Caco-2 (cell line): ENCODE measurements at regions of chr19 and their contacts with region 1.

Region 1: GRCh38 chr19:18251587-18252369 is 22.5 kb downstream of the IQCN start:
- DNase-seq: peak; percentile 60 to 81
- H3K4me3 ChIP-seq: no peak overlapping the region
- H3K4me3 Mint-ChIP-seq: no peak overlapping the region
- H3K27ac Mint-ChIP-seq: no peak overlapping the region
- H3K4me1 ChIP-seq: no peaks in the 10 kb centered on the region
- H3K4me1 Mint-ChIP-seq: peaks cover 6% of the 10 kb centered on the region
- H3K27me3 ChIP-seq: no peaks in the 10 kb centered on the region
- H3K27me3 Mint-ChIP-seq: no peaks in the 10 kb centered on the region
- CTCF ChIP-seq: peak; percentile 87 to 97

Region 2: DNA sequence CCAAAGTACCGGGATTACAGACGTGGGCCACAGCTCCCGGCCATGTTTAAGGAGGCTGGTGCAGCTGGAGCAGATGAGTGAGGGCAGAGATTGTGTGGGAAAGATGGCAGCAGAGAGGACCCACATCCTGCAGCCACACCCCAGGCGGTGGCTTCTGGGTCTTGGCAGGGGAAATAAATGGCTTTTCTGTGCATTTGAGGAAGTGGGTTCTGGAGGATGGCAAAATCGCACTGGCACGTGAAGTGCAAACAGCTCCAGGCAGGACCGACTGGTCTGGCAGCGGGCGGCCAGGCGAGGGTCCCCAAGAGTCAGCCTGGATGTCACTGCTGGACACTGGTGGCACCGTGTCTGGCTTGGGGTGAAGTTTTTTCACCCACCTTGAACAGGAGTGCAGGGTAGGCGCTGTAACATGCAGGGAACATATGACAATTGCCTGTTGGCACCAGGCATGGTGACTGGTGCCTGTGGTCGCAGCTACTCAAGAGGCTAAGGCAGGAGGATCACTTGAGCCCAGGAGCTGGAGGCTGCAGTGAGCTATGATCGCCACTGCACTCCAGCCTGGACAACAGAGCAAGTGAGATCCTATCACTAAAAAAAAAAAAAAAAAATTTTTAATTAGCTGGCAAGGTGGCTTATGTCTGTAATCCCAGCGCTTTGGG is 448.4 kb before region 1 on chr19:
- CTCF ChIA-PET with region 1: no interaction called
- POLR2A ChIA-PET with region 1: no interaction called
- intact Hi-C with region 1: no loop called
- DNase-seq: no peak
- H3K4me3 ChIP-seq: no peak overlapping the region
- H3K4me3 Mint-ChIP-seq: no peak overlapping the region
- H3K27ac Mint-ChIP-seq: no peak overlapping the region
- H3K4me1 ChIP-seq: no peaks in the 10 kb centered on the region; the same call in 1 of the 2 replicates
- H3K4me1 Mint-ChIP-seq: no peaks in the 10 kb centered on the region
- H3K27me3 ChIP-seq: no peaks in the 10 kb centered on the region
- H3K27me3 Mint-ChIP-seq: no peaks in the 10 kb centered on the region
- CTCF ChIP-seq: no peak

Region 3: GRCh38 chr19:18112989-18113478 is 138.7 kb before region 1 on chr19:
- CTCF ChIA-PET with region 1: interaction called, 24 read pairs
- POLR2A ChIA-PET with region 1: no interaction called
- intact Hi-C with region 1: no loop called
- DNase-seq: peak; percentile 85 to 92
- H3K4me3 ChIP-seq: no peak overlapping the region
- H3K4me3 Mint-ChIP-seq: no peak overlapping the region
- H3K27ac Mint-ChIP-seq: peak overlapping the region; percentile 38
- H3K4me1 ChIP-seq: peaks cover 17% of the 10 kb centered on the region
- H3K4me1 Mint-ChIP-seq: peaks cover 13% of the 10 kb centered on the region
- H3K27me3 ChIP-seq: no peaks in the 10 kb centered on the region
- H3K27me3 Mint-ChIP-seq: no peaks in the 10 kb centered on the region
- CTCF ChIP-seq: peak; percentile 87 to 89

Region 4: GRCh38 chr19:18179957-18180356 is 71.8 kb before region 1 on chr19:
- CTCF ChIA-PET with region 1: no interaction called
- POLR2A ChIA-PET with region 1: interaction called, 13 read pairs
- intact Hi-C with region 1: no loop called
- DNase-seq: no peak
- H3K4me3 ChIP-seq: no peak overlapping the region
- H3K4me3 Mint-ChIP-seq: no peak overlapping the region
- H3K27ac Mint-ChIP-seq: no peak overlapping the region
- H3K4me1 ChIP-seq: 0 out of 2 replicates have a peak, but pooled peaks cover 3% of the 10 kb centered on the region
- H3K4me1 Mint-ChIP-seq: no peaks in the 10 kb centered on the region
- H3K27me3 ChIP-seq: no peaks in the 10 kb centered on the region
- H3K27me3 Mint-ChIP-seq: no peaks in the 10 kb centered on the region
- CTCF ChIP-seq: no peak

Region 5: DNA sequence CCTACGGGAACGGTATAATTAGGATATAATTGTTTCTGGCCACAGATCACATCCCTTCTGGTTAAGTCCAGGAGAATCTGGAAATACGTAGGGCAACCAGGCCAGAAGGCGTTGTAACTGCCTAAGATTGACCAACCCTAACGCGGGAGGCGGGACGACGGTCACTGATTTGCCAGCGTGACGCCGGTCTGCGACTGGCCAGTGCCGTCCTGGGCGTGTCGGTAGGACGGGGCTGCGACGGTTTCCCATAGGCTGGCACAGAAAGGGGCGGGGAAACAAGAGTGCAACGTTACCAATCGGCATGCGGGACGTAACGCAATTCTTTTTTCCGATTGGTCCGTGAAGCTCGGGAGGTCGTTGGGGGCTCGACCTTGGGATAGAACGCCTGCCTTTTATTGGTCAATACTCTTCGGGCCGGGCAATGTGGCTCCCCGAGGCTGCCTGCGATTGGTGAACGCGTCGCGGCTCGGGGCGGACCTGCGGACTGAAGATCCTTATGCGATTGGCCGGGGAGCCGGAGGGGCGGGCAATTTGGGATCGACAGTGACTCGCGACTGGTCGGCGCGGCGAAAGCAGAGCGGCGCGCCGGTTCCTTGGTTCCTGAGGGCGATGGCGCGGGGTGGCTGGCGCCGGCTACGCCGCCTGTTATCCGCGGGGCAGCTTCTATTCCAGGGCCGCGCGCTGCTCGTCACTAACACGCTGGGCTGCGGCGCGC is 58.9 kb before region 1 on chr19 and contains the start of gene MPV17L2:
- CTCF ChIA-PET with region 1: interaction called, 12 read pairs
- POLR2A ChIA-PET with region 1: interaction called, 14 read pairs
- intact Hi-C with region 1: no loop called
- DNase-seq: peak; percentile 98 to 99
- H3K4me3 ChIP-seq: peak within 1 kb of the TSS; percentile 77
- H3K4me3 Mint-ChIP-seq: peak within 1 kb of the TSS; percentile 76
- H3K27ac Mint-ChIP-seq: peak within 1 kb of the TSS; percentile 69
- H3K4me1 ChIP-seq: peaks cover 4% of the 10 kb centered on the region; the same call in 1 of the 2 replicates
- H3K4me1 Mint-ChIP-seq: no peaks in the 10 kb centered on the region
- H3K27me3 ChIP-seq: no peaks in the 10 kb centered on the region
- H3K27me3 Mint-ChIP-seq: no peaks in the 10 kb centered on the region
- CTCF ChIP-seq: no peak
- total RNA-seq, gene MPV17L2: 14.1 and 16.6 TPM in 2 replicates

Region 6: GRCh38 chr19:18203863-18204393 is 47.9 kb before region 1 on chr19 and contains the start of gene RAB3A:
- CTCF ChIA-PET with region 1: interaction called, 33 read pairs
- POLR2A ChIA-PET with region 1: no interaction called
- intact Hi-C with region 1: loop called (anchors 1 kb)
- DNase-seq: peak; percentile 99
- H3K4me3 ChIP-seq: peak within 1 kb of the TSS; percentile 90
- H3K4me3 Mint-ChIP-seq: peak within 1 kb of the TSS; percentile 90
- H3K27ac Mint-ChIP-seq: peak within 1 kb of the TSS; percentile 87
- H3K4me1 ChIP-seq: peaks cover 5% of the 10 kb centered on the region; the same call in 1 of the 2 replicates
- H3K4me1 Mint-ChIP-seq: no peaks in the 10 kb centered on the region
- H3K27me3 ChIP-seq: no peaks in the 10 kb centered on the region
- H3K27me3 Mint-ChIP-seq: no peaks in the 10 kb centered on the region
- CTCF ChIP-seq: no peak
- total RNA-seq, gene RAB3A: 2.3 and 3.9 TPM in 2 replicates

Region 7: GRCh38 chr19:18224525-18225354 is 27.0 kb before region 1 on chr19:
- CTCF ChIA-PET with region 1: interaction called, 11 read pairs
- POLR2A ChIA-PET with region 1: no interaction called
- intact Hi-C with region 1: loop called (anchors 2 kb)
- DNase-seq: peak; percentile 97 to 98
- H3K4me3 ChIP-seq: peak overlapping the region; percentile 79
- H3K4me3 Mint-ChIP-seq: peak overlapping the region; percentile 95
- H3K27ac Mint-ChIP-seq: peak overlapping the region; percentile 81
- H3K4me1 ChIP-seq: 0 out of 2 replicates have a peak, but pooled peaks cover 5% of the 10 kb centered on the region
- H3K4me1 Mint-ChIP-seq: peaks cover 10% of the 10 kb centered on the region
- H3K27me3 ChIP-seq: no peaks in the 10 kb centered on the region
- H3K27me3 Mint-ChIP-seq: no peaks in the 10 kb centered on the region
- CTCF ChIP-seq: no peak

Region 8: DNA sequence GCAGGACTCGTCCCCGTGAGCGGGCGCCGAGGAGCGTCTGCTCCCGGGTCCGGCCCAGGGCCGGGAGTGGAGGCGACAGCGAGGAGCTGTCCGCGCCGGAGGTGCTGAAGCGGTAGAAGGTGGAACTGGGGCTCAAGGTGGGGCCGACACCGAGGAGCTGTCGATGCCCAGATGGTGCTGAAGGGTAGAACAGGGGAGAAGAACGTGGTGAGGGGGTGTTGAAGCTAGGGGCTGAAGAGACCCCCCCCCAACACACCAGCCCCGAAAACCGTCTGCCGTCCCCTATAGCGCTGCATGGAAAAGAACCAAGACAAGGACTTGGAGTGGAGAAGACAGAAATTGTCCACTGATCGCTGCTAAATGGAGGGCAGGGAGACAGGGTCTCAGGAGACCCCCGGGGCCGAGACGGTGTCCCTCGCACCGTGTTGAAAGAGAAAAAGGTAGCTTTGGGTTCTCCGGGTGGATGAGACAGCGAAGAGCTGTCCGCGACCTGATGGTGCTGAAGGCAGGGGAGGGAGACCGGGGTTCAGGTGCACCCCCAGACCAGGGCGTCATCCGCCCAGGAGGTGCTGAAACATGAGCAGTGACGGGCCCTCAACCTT is 18.5 kb before region 1 on chr19:
- CTCF ChIA-PET with region 1: interaction called, 5 read pairs
- POLR2A ChIA-PET with region 1: no interaction called
- intact Hi-C with region 1: loop called (anchors 2 kb)
- DNase-seq: peak; percentile 59 to 77
- H3K4me3 ChIP-seq: no peak overlapping the region
- H3K4me3 Mint-ChIP-seq: no peak overlapping the region
- H3K27ac Mint-ChIP-seq: no peak overlapping the region
- H3K4me1 ChIP-seq: 0 out of 2 replicates have a peak, but pooled peaks cover 3% of the 10 kb centered on the region
- H3K4me1 Mint-ChIP-seq: no peaks in the 10 kb centered on the region
- H3K27me3 ChIP-seq: no peaks in the 10 kb centered on the region
- H3K27me3 Mint-ChIP-seq: peaks cover 6% of the 10 kb centered on the region
- CTCF ChIP-seq: no peak